GM18951 (cell line): ENCODE measurements at regions of chr17 and their contacts with region 1.

Region 1: DNA sequence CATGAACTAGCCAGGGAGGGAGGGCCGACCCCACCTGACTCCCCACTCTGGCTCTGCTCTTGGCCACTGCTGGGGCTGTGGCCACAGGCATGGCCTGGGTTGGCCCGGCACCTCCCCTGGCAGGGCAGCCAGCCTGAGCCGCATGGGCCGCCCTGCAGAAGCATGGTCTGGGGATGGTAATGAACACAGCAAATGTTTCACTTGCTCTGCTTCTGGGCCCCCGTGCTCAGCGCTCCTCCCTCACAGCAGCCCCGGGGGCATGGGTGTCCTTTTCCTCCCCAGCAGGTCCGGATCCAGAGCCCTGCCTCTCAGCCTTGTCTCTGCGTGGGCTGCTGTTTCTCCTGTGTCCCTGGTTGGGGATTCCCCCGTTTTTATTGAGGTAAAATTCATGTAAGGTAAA is 30.9 kb upstream of the KCNJ12 start:
- POLR2A ChIP-seq: no peak

Region 2: DNA sequence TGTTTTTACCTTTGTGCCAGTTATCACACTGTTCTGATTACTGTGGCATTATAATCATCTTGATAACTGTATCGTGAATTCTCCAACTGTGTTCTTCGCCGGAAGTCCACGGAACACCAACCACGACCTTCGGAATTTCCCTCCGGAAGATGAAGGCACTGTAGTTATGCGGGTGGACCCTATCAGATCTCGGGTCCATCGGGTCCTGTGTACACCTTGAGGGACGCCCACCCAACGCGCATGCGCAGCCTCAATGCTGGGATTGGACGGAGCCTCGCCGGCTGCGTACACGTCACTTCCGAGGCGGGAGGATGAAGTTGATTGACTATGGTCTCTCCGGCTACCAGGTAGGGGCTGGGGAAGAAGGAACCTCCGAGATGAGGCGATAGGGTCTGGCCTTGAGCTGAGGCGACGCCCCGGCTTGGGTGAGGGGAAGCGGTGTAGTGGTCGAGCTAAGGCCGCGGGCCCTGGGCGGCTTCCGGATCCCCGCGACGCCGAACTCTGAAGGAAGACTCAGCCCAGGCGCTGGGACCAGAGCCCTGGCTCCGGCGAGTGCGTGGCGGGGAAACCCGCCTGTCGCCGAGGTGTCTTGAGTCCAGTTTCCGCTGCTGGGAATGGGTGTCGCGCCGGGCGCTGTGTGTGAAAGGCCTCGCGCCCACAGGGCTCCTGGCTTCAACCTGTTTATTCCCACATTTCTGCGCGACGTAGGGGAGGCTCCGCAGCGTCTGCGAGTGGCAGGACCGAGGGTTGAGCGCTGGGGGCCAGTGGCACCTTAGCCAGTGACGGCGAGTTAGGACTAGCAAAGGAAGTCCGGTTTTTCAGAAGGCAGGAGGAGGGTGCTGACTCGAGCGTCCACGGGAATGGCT is 218.4 kb before region 1 on chr17 and contains the start of gene DHRS7B:
- in situ Hi-C with region 1: no loop called
- POLR2A ChIP-seq: peak; percentile 87

Region 3: GRCh38 chr17:21742326-21742725 is 397.1 kb after region 1 on chr17:
- in situ Hi-C with region 1: loop called (anchors 10 kb)
- POLR2A ChIP-seq: no peak